HEK293 (cell line): ENCODE measurements at regions of chr14 and their contacts with region 1.

Region 1: DNA sequence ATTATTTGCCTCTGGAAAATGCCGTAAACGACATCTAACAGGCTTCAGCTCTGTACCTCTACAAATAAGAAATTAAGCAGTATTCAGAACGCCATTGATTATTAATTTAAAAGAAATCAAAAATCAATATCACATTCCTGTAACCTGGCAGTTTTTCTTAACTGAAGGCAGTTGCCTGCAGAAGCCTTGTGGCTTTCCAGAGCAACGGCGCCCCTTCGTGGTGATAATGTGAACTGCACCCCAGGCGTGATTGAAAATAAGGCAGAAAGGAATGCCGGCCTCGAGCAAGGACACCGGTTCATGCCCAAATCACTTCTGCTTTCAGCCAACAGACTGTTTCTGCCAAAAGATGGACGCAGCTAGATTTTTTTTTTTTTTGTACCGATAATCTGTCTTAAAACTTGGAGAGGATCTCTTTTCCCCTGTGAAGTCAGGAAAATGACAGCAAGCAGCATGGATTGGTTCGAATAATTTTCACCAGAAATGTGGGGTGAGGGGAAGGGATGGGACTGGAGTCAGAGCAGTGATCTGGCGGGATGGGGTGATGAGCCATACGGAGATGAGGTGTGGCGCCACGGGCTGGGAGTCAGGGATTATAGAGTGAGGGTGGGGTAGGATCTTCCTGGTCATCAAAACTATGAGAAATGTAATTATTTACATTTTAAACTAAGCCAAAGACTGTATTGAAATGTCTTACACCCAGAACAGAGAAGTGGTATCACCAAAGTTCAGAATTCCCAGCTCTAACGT is 473.0 kb downstream of the DPF3 start:
- H3K4me3 ChIP-seq: no peak overlapping the region
- H3K27ac ChIP-seq: no peak overlapping the region
- H3K4me1 ChIP-seq: no peaks in the 10 kb centered on the region
- CTCF ChIP-seq: no peak

Region 2: GRCh38 chr14:72023722-72024407 is 397.0 kb before region 1 on chr14:
- CTCF ChIA-PET with region 1: interaction called, 14 read pairs
- POLR2A ChIA-PET with region 1: no interaction called
- H3K4me3 ChIP-seq: no peak overlapping the region
- H3K27ac ChIP-seq: no peak overlapping the region
- H3K4me1 ChIP-seq: 0 out of 2 replicates have a peak, but pooled peaks cover 5% of the 10 kb centered on the region
- CTCF ChIP-seq: no peak

Region 3: DNA sequence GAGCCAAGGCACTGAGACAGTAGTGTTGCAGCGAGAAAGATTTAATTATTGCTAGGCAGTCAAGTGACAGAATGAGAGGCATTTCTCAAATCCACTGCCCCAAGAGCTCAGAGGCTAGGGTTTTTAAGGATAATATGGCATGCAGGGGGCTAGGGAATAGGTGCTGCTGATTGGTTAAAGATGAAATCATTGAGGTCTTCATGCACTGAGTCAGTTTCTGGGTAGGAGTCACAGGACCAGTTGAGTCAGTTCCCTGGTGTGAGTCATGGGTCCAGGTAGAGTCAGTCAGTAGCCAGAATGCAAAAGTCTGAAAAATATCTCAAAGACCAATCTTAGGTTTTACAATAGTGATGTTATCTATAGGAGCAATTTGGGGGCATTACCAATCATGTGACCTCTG is 164.8 kb before region 1 on chr14:
- CTCF ChIA-PET with region 1: no interaction called
- POLR2A ChIA-PET with region 1: no interaction called
- H3K4me3 ChIP-seq: no peak overlapping the region
- H3K27ac ChIP-seq: no peak overlapping the region
- H3K4me1 ChIP-seq: no peaks in the 10 kb centered on the region
- CTCF ChIP-seq: no peak